CD4-positive, alpha-beta T cell (primary cell): ENCODE measurements at regions of chr1 and their contacts with region 1.

Region 1: GRCh38 chr1:109426278-109427170 is at the start of gene PSMA5:
- DNase-seq: peak; percentile 87 to 99 (median 92)
- ATAC-seq: peak; percentile 91
- H3K4me3 ChIP-seq: peak within 1 kb of the TSS; percentile 98
- H3K4me3 Mint-ChIP-seq: peak within 1 kb of the TSS; percentile 98
- H3K27ac ChIP-seq: peak within 1 kb of the TSS; percentile 91 to 95
- H3K27ac Mint-ChIP-seq: peak within 1 kb of the TSS; percentile 98
- H3K4me1 ChIP-seq: peaks cover 33% of the 10 kb centered on the region
- H3K4me1 Mint-ChIP-seq: peaks cover 52% of the 10 kb centered on the region
- H3K27me3 ChIP-seq: no peaks in the 10 kb centered on the region
- H3K27me3 Mint-ChIP-seq: no peaks in the 10 kb centered on the region
- CTCF ChIP-seq: no peak
- total RNA-seq, gene PSMA5: 29.8 to 33.8 TPM

Region 2: DNA sequence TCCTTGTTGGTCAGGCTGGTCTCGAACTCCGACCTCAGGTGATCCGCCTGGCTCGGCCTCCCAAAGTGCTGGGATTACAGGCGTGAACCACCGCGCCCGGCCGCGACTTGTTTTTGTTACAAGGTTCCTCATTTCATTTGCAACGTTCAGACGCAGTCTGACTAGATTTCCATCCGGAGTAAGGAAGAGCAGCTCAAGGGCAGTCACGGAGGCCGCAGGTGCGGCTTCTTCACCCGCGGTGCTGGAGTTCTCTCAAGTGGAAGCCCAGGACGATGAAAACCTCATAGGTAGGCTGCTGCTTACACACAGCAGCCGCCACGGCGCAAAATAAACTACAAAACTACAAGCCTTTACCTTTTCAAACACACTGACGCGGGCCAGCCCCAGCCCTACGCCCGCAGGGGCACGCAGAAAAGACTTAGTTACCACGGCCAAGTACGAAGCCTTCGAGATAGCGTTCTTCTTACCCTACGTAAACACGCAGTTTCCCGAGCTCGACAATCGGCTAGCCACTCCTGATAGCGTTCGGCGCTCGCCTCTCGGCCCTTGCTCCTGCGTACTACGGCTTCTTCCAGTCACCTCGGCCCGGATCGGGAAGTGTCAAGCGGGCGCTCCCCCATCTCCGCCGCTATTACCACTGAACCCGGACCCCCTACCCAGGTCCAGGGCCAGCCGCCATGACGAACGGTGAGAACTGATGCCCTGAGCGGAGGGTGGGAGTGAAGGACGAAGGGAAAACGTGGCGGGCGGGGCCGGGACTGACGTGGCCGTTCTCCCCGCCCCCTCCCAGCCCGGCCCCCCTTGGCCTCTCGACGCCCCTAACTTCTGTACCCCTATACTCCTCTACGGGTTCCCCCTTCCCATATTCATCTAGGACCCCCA is 336.1 kb before region 1 on chr1 and contains the start of gene TMEM167B:
- CTCF ChIA-PET with region 1: no interaction called
- POLR2A ChIA-PET with region 1: interaction called, 6 read pairs
- intact Hi-C with region 1: loop called in 1 of 2 experiments (anchors 5 kb)
- DNase-seq: peak; percentile 76 to 94 (median 82)
- ATAC-seq: peak; percentile 86
- H3K4me3 ChIP-seq: peak within 1 kb of the TSS; percentile 98
- H3K4me3 Mint-ChIP-seq: peak within 1 kb of the TSS; percentile 97
- H3K27ac ChIP-seq: peak within 1 kb of the TSS; percentile 84 to 98
- H3K27ac Mint-ChIP-seq: peak within 1 kb of the TSS; percentile 94
- H3K4me1 ChIP-seq: peaks cover 27% of the 10 kb centered on the region
- H3K4me1 Mint-ChIP-seq: peaks cover 44% of the 10 kb centered on the region
- H3K27me3 ChIP-seq: no peaks in the 10 kb centered on the region
- H3K27me3 Mint-ChIP-seq: no peaks in the 10 kb centered on the region
- CTCF ChIP-seq: no peak
- total RNA-seq, gene TMEM167B: 70.2 to 71.0 TPM

Region 3: GRCh38 chr1:109499661-109500536 is 73.4 kb after region 1 on chr1:
- CTCF ChIA-PET with region 1: no interaction called
- POLR2A ChIA-PET with region 1: interaction called, 18 read pairs
- intact Hi-C with region 1: no loop called
- DNase-seq: peak; percentile 27 to 84 (median 67)
- ATAC-seq: peak; percentile 32
- H3K4me3 ChIP-seq: no peak overlapping the region
- H3K4me3 Mint-ChIP-seq: peak overlapping the region; percentile 54
- H3K27ac ChIP-seq: peak overlapping the region; percentile 90 to 94
- H3K27ac Mint-ChIP-seq: peak overlapping the region; percentile 95
- H3K4me1 ChIP-seq: peaks cover 99% of the 10 kb centered on the region
- H3K4me1 Mint-ChIP-seq: peaks cover 93% of the 10 kb centered on the region
- H3K27me3 ChIP-seq: no peaks in the 10 kb centered on the region
- H3K27me3 Mint-ChIP-seq: no peaks in the 10 kb centered on the region
- CTCF ChIP-seq: peak; percentile 58

Region 4: DNA sequence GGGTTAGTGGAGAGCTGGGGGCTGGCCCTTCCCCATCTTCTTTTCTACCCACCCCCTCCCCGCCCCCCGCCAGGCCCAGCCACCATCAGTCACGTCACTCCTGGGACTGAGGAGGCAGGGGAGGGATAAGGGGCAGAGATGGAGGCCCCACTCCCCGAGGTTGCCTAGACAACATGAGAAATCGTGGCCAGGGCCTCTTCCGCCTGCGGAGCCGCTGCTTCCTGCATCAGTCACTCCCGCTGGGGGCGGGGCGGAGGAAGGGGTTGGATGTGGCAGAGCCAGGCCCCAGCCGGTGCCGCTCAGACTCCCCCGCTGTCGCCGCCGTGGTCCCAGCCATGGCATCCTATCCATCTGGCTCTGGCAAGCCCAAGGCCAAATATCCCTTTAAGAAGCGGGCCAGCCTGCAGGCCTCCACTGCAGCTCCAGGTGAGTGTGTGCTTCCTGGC is 194.3 kb after region 1 on chr1:
- CTCF ChIA-PET with region 1: no interaction called
- POLR2A ChIA-PET with region 1: interaction called, 6 read pairs
- intact Hi-C with region 1: loop called in 1 of 2 experiments (anchors 5 kb)
- DNase-seq: peak; percentile 91 to 99 (median 97)
- ATAC-seq: peak; percentile 86
- H3K4me3 ChIP-seq: peak overlapping the region; percentile 91
- H3K4me3 Mint-ChIP-seq: peak overlapping the region; percentile 99
- H3K27ac ChIP-seq: peak overlapping the region; percentile 85 to 95
- H3K27ac Mint-ChIP-seq: peak overlapping the region; percentile 89
- H3K4me1 ChIP-seq: peaks cover 80% of the 10 kb centered on the region
- H3K4me1 Mint-ChIP-seq: peaks cover 82% of the 10 kb centered on the region
- H3K27me3 ChIP-seq: no peaks in the 10 kb centered on the region
- H3K27me3 Mint-ChIP-seq: no peaks in the 10 kb centered on the region
- CTCF ChIP-seq: no peak

Region 5: GRCh38 chr1:110034451-110035235 is 608.1 kb after region 1 on chr1 and contains the start of gene STRIP1:
- CTCF ChIA-PET with region 1: no interaction called
- POLR2A ChIA-PET with region 1: interaction called, 10 read pairs
- intact Hi-C with region 1: loop called in 1 of 2 experiments (anchors 2 kb)
- DNase-seq: peak; percentile 85 to 98 (median 89)
- ATAC-seq: peak; percentile 95
- H3K4me3 ChIP-seq: peak within 1 kb of the TSS; percentile 84
- H3K4me3 Mint-ChIP-seq: peak within 1 kb of the TSS; percentile 98
- H3K27ac ChIP-seq: peak within 1 kb of the TSS; percentile 37 to 64
- H3K27ac Mint-ChIP-seq: peak within 1 kb of the TSS; percentile 81
- H3K4me1 ChIP-seq: peaks cover 41% of the 10 kb centered on the region
- H3K4me1 Mint-ChIP-seq: peaks cover 56% of the 10 kb centered on the region
- H3K27me3 ChIP-seq: no peaks in the 10 kb centered on the region
- H3K27me3 Mint-ChIP-seq: no peaks in the 10 kb centered on the region
- CTCF ChIP-seq: no peak
- total RNA-seq, gene STRIP1: 74.3 to 80.9 TPM